MCF 10A (cell line): ENCODE measurements at regions of chr5 and their contacts with region 1.

Region 1: GRCh38 chr5:96752341-96753016 is 55.3 kb downstream of the ERAP1 start:
- DNase-seq: peak; percentile 70
- H3K4me3 Mint-ChIP-seq: no peak overlapping the region
- H3K27ac Mint-ChIP-seq: no peak overlapping the region
- H3K4me1 Mint-ChIP-seq: no peaks in the 10 kb centered on the region
- H3K27me3 Mint-ChIP-seq: no peaks in the 10 kb centered on the region
- CTCF ChIP-seq: no peak

Region 2: DNA sequence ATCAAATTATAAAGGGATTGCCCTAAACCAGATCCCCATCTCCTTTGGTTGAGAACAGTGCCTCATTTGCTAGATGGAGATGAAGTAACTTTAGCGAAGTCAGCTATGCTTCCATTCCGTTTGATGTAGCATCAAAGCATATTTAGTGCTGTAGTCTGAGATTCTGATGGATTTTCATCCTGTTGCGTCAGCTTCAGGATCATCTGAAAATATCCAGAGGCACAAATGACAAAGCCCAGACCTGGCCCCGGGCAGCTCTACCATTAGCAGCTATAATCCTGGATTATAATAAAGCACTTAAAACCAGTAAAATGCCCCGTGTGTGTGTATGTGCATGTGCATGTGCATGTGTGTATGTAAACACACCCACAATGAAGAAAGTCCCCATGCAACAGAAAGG is 10.5 kb after region 1 on chr5:
- CTCF ChIA-PET with region 1: interaction called, 41 read pairs
- POLR2A ChIA-PET with region 1: interaction called, 4 read pairs
- intact Hi-C with region 1: no loop called
- DNase-seq: no peak
- H3K4me3 Mint-ChIP-seq: no peak overlapping the region
- H3K27ac Mint-ChIP-seq: no peak overlapping the region
- H3K4me1 Mint-ChIP-seq: no peaks in the 10 kb centered on the region
- H3K27me3 Mint-ChIP-seq: no peaks in the 10 kb centered on the region
- CTCF ChIP-seq: no peak

Region 3: DNA sequence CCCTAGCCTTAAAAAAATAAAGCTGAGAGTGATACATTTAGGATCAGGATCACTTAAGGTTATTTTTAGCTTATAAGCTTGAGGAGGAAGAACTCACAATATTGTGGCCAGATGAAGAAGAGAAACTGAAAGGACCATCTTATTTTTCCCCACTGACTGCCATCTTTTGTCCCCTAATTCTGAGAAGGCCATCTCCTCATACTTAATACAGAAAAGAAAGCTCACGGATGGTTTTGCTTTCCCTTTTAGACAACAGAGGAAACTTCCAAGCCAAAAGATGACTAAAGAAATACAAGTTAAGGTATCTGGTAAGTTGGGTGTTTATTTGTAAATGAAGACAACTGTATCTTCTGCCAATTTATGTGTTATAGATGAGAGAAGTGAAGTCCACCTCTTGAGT is 18.9 kb after region 1 on chr5:
- CTCF ChIA-PET with region 1: interaction called, 22 read pairs
- POLR2A ChIA-PET with region 1: interaction called, 4 read pairs
- intact Hi-C with region 1: no loop called
- DNase-seq: no peak
- H3K4me3 Mint-ChIP-seq: no peak overlapping the region
- H3K27ac Mint-ChIP-seq: peak overlapping the region; percentile 49
- H3K4me1 Mint-ChIP-seq: no peaks in the 10 kb centered on the region
- H3K27me3 Mint-ChIP-seq: no peaks in the 10 kb centered on the region
- CTCF ChIP-seq: no peak